Heart left ventricle (tissue), 16 donors: ENCODE measurements at regions of chr14 and their contacts with region 1.

Region 1: DNA sequence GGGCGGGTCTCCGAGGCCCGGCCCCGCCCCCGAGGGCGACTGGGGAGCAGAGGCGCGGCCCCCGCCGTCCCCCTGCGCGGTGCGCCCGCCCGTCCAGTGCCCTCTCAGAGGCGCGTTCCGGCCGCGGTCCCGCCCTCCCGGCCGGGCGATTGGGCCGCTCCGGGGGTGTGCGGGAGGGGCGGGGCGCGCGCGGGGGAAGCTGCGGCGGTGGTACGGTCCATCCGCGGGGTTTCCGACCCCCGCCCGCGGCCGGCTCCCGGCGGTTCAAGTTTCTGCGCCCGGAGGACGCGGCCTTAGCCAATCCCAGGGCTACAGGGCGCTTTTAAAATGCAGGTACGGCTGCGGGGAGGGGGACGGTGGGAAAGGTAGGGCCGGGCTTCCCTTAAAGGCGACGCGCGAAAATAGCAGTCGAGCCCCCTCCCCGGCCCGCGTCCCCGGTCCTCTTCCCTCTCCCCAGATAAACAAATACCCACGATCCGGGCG is 317 bp upstream of the CCDC85C start:
- DNase-seq: peak; percentile 95 to 97 (median 96)
- ATAC-seq: peak; percentile 92 to 95 (median 94)
- H3K4me3 ChIP-seq: peak overlapping the region; percentile 42 to 93 (median 82)
- H3K27ac ChIP-seq: peak overlapping the region; percentile 75 to 96 (median 91)
- H3K4me1 ChIP-seq: peaks cover 13 to 62% (median 46%) of the 10 kb centered on the region in 12 donors
- H3K27me3 ChIP-seq: peaks cover 0 to 22% (median 0%) of the 10 kb centered on the region in 9 donors
- CTCF ChIP-seq: no peak
- POLR2A ChIP-seq: peak in 1 of 2 donors; percentile 46

Region 2: GRCh38 chr14:99524804-99525698 is 79.3 kb before region 1 on chr14:
- intact Hi-C with region 1: loop called in 4 of 10 experiments (anchors 2 to 10 kb)
- DNase-seq: peak in 3 of 5 donors; percentile 25 to 46 (median 40)
- ATAC-seq: peak in 3 of 4 donors; percentile 33 to 67 (median 46)
- H3K4me3 ChIP-seq: no peak overlapping the region
- H3K27ac ChIP-seq: peak overlapping the region in 11 of 12 donors; percentile 26 to 84 (median 61)
- H3K4me1 ChIP-seq: peaks cover 6 to 62% (median 38%) of the 10 kb centered on the region in 12 donors
- H3K27me3 ChIP-seq: no peaks in the 10 kb centered on the region
- CTCF ChIP-seq: peak in 10 of 12 donors; percentile 8 to 51 (median 27)
- POLR2A ChIP-seq: no peak

Region 3: GRCh38 chr14:99537399-99537798 is 66.9 kb before region 1 on chr14:
- intact Hi-C with region 1: loop called in 3 of 10 experiments (anchors 5 to 10 kb)
- DNase-seq: peak in 3 of 5 donors; percentile 57 to 78 (median 70)
- ATAC-seq: peak; percentile 57 to 77 (median 71)
- H3K4me3 ChIP-seq: no peak overlapping the region
- H3K27ac ChIP-seq: peak overlapping the region in 9 of 12 donors; percentile 11 to 84 (median 69)
- H3K4me1 ChIP-seq: peaks cover 2 to 81% (median 55%) of the 10 kb centered on the region in 12 donors
- H3K27me3 ChIP-seq: no peaks in the 10 kb centered on the region
- CTCF ChIP-seq: no peak
- POLR2A ChIP-seq: no peak

Region 4: DNA sequence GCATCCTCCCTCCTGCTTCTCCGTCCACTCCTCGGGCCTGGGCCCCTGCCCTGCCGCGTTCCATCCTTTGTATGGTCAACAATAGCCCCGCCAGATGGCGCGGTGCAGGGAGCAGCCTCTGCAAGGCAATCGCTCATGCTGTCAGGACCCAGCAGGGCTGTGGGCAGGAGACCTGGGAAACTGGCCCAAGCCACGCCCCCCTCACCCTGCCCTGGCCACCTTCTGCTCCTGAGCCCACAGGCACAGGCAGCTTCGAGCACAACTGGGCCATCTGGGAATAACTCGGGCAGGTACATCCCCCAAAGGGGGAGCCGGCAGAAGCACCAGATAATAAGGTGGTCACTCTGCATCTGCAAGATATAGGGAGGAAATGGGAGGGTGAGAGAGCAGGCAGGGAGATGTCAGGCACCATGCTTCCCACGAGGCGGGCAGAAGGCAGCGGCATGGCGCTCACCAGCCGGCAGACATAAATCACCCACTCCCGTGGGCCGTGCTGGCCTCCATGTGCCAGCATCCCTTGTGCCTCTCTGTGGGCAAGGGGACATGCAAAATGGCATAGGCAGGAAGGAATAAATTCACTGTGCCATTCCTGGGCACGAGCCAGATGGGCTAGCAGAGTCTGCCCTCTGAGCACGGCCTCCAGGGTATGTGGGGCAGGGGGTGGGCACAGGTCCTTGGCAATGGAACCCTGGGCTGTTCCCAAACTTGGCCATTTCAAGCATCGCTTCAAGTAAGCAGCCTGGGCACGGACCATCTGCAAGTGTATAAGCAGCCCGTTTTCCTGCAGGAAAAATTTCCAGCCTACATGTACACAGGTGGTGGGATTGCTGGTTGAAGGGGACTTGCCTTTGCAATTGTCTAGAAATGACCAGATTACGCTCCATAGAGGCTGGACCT is 40.8 kb before region 1 on chr14:
- intact Hi-C with region 1: loop called in 8 of 10 experiments (anchors 2 to 5 kb)
- DNase-seq: peak; percentile 76 to 91 (median 86)
- ATAC-seq: peak; percentile 73 to 83 (median 76)
- H3K4me3 ChIP-seq: no peak overlapping the region
- H3K27ac ChIP-seq: peak overlapping the region in 10 of 12 donors; percentile 20 to 86 (median 70)
- H3K4me1 ChIP-seq: peaks cover 6 to 80% (median 56%) of the 10 kb centered on the region in 12 donors
- H3K27me3 ChIP-seq: no peaks in the 10 kb centered on the region
- CTCF ChIP-seq: peak in 11 of 12 donors; percentile 14 to 57 (median 45)
- POLR2A ChIP-seq: no peak

Region 5: GRCh38 chr14:99568567-99569560 is 35.5 kb before region 1 on chr14:
- intact Hi-C with region 1: loop called in 7 of 10 experiments (anchors 5 kb)
- DNase-seq: peak in 3 of 5 donors; percentile 68 to 78 (median 74)
- ATAC-seq: peak; percentile 38 to 61 (median 40)
- H3K4me3 ChIP-seq: no peak overlapping the region
- H3K27ac ChIP-seq: peak overlapping the region in 11 of 12 donors; percentile 32 to 86 (median 69)
- H3K4me1 ChIP-seq: peaks cover 6 to 99% (median 81%) of the 10 kb centered on the region in 12 donors
- H3K27me3 ChIP-seq: no peaks in the 10 kb centered on the region
- CTCF ChIP-seq: no peak
- POLR2A ChIP-seq: no peak

Region 6: DNA sequence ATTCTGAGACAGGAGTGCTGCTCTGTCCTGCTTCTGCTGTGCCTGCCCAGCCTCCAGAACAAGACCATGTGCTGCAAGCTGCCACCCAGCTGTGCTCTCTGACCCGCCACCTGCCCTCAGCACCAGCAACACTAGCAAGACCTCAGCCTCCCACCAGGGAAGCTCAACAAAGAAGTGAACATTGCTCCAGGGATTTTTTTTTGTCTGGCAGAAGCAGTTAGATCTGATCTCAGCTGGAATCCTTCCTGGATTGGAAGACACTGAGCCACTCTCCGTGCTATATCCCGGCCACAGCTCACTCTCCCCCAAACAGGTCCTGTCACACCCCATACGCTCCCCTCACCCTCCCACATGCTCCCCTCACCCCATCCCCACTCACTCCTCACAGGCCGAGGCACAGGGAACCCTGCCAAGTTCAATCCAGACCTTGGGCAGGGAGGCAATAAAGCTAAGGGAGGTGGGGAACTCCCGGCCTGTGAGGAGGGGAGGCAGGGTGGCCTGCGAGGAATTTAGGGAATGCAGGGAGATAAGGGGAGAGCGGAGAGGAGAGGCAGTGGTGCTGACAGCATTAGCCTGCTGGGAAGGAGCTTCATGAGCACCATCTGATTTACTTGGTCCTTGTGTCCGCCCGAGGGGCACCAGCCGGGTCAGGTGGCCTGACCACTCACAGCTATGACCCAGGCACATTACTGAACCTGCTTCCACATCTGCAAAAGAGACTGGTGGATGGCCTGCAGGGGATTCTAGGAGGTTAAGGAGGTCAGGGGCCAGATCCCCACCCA is 30.0 kb before region 1 on chr14:
- intact Hi-C with region 1: loop called in 5 of 10 experiments (anchors 5 kb)
- DNase-seq: peak in 4 of 5 donors; percentile 61 to 73 (median 71)
- ATAC-seq: peak; percentile 10 to 57 (median 29)
- H3K4me3 ChIP-seq: no peak overlapping the region
- H3K27ac ChIP-seq: peak overlapping the region in 11 of 12 donors; percentile 64 to 91 (median 81)
- H3K4me1 ChIP-seq: peaks cover 0 to 96% (median 77%) of the 10 kb centered on the region in 12 donors
- H3K27me3 ChIP-seq: no peaks in the 10 kb centered on the region
- CTCF ChIP-seq: no peak
- POLR2A ChIP-seq: no peak